Activated CD4-positive, alpha-beta memory T cell treated with anti-CD3 and anti-CD28 coated beads, Interleukin-2, amount 10 ng/mL, durations not matched to agents 7 days and 5 days (primary cell): ENCODE measurements at regions of chr19 and their contacts with region 1.

Region 1: DNA sequence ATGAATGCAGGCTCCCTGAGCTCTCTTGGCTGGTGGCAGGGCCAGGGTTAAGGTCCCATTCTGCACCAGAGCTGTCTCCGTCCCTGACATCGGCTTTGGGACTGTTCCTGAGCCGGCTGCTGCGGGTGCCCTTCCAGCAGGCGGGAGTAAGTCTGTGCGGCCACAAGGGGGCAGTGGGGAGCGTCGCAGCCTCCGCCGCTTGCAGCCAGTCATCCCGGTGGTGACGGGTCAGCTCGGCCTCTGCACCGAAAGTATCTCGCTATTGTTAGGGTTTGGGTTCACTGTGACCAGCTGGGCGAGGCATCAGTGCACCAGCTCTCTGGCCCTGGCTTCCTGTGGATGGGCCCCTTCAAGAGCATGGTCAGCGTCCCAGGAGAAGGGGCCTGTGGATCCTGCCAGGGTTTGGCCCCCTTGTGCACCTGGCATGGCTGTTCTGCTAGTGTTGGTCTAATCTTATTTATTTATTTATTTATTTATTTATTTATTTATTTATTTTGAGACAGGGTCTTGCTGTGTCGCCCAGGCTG is 15.1 kb downstream of the NDUFB7 start:
- DNase-seq: peak; percentile 73
- H3K4me3 Mint-ChIP-seq: no peak overlapping the region
- H3K27ac Mint-ChIP-seq: no peak overlapping the region
- H3K4me1 Mint-ChIP-seq: peaks cover 24% of the 10 kb centered on the region
- H3K27me3 Mint-ChIP-seq: no peaks in the 10 kb centered on the region

Region 2: GRCh38 chr19:14505488-14506432 is 51.0 kb before region 1 on chr19:
- CTCF ChIA-PET with region 1: interaction called, 11 read pairs
- POLR2A ChIA-PET with region 1: interaction called, 3 read pairs
- DNase-seq: peak; percentile 79
- H3K4me3 Mint-ChIP-seq: no peak overlapping the region
- H3K27ac Mint-ChIP-seq: peak overlapping the region; percentile 57
- H3K4me1 Mint-ChIP-seq: peaks cover 44% of the 10 kb centered on the region
- H3K27me3 Mint-ChIP-seq: peaks cover 2% of the 10 kb centered on the region

Region 3: GRCh38 chr19:14542711-14543328 is 13.9 kb before region 1 on chr19:
- CTCF ChIA-PET with region 1: interaction called, 10 read pairs
- POLR2A ChIA-PET with region 1: no interaction called
- DNase-seq: no peak
- H3K4me3 Mint-ChIP-seq: no peak overlapping the region
- H3K27ac Mint-ChIP-seq: no peak overlapping the region
- H3K4me1 Mint-ChIP-seq: peaks cover 11% of the 10 kb centered on the region
- H3K27me3 Mint-ChIP-seq: no peaks in the 10 kb centered on the region